PC-3 (cell line): ENCODE measurements at regions of chr2 and their contacts with region 1.

Region 1: GRCh38 chr2:64330281-64331113 is 123.5 kb upstream of the LGALSL start:
- DNase-seq: peak; percentile 87
- ATAC-seq: peak; percentile 49
- H3K4me3 ChIP-seq: peak overlapping the region; percentile 61
- H3K27ac ChIP-seq: no peak overlapping the region
- H3K4me1 ChIP-seq: peaks cover 32% of the 10 kb centered on the region
- H3K27me3 ChIP-seq: no peaks in the 10 kb centered on the region
- CTCF ChIP-seq: peak; percentile 96

Region 2: DNA sequence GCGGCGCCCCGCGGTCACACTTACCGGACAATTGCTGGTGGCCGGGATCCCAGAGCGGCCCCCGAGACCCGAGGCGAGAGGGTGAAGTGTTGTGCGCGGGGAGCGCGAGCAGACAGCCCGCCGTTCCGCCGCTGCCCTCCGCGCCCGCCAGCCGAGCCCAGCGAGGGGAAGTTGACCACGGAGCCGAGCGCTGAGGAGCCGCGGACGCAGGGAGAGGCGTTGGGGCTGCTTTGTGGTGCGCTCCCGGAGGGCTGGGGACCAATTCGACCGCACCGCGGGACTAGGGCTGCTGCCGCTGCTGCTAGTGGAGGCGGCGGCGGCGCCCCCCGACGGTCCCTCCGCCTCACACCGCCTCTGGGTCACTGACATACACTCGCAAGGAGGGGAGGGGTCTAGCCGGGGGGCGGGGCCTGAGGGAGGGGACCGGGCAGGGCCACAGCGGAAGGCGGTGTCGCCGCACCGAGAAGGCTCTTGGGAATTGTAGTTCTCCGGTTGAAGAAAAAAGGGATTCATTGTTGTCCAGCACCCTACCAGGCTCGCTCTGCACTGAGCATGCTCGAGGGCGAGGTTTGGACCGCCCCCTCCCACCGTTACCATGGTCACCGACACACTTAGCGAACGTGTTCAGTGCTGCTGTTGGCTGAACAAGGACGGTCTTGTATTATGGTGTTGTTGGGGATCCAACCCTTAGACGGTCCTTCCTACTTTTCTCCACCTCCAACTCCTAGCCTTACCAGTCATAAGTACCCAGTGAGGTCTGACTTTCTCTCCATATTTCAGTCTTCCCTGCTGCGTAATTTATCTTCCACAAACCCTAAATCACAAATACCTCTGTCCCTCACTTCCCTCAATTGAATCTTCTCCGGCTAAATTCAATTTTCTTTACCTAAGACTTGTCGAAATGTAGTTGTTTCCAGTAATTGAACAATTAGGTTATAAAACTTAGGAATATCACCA is 186.2 kb before region 1 on chr2 and contains the start of gene PELI1:
- CTCF ChIA-PET with region 1: no interaction called
- POLR2A ChIA-PET with region 1: no interaction called
- intact Hi-C with region 1: loop called (anchors 5 kb)
- DNase-seq: peak; percentile 97
- ATAC-seq: peak; percentile 89
- H3K4me3 ChIP-seq: peak within 1 kb of the TSS; percentile 90
- H3K27ac ChIP-seq: no peak within 1 kb of the TSS
- H3K4me1 ChIP-seq: peaks cover 18% of the 10 kb centered on the region; the same call in 1 of the 2 replicates
- H3K27me3 ChIP-seq: no peaks in the 10 kb centered on the region
- CTCF ChIP-seq: peak; percentile 21; the same call in 1 of the 2 replicates
- total RNA-seq, gene PELI1: 5.6 and 10.4 TPM in 2 replicates

Region 3: GRCh38 chr2:64192125-64192479 is 138.4 kb before region 1 on chr2:
- CTCF ChIA-PET with region 1: no interaction called
- POLR2A ChIA-PET with region 1: no interaction called
- intact Hi-C with region 1: no loop called
- DNase-seq: no peak
- ATAC-seq: no peak
- H3K4me3 ChIP-seq: no peak overlapping the region
- H3K27ac ChIP-seq: no peak overlapping the region
- H3K4me1 ChIP-seq: no peaks in the 10 kb centered on the region
- H3K27me3 ChIP-seq: no peaks in the 10 kb centered on the region
- CTCF ChIP-seq: no peak

Region 4: GRCh38 chr2:64267699-64268098 is 62.8 kb before region 1 on chr2:
- CTCF ChIA-PET with region 1: no interaction called
- POLR2A ChIA-PET with region 1: no interaction called
- intact Hi-C with region 1: no loop called
- DNase-seq: no peak
- ATAC-seq: no peak
- H3K4me3 ChIP-seq: no peak overlapping the region
- H3K27ac ChIP-seq: no peak overlapping the region
- H3K4me1 ChIP-seq: peaks cover 19% of the 10 kb centered on the region
- H3K27me3 ChIP-seq: no peaks in the 10 kb centered on the region
- CTCF ChIP-seq: no peak

Region 5: DNA sequence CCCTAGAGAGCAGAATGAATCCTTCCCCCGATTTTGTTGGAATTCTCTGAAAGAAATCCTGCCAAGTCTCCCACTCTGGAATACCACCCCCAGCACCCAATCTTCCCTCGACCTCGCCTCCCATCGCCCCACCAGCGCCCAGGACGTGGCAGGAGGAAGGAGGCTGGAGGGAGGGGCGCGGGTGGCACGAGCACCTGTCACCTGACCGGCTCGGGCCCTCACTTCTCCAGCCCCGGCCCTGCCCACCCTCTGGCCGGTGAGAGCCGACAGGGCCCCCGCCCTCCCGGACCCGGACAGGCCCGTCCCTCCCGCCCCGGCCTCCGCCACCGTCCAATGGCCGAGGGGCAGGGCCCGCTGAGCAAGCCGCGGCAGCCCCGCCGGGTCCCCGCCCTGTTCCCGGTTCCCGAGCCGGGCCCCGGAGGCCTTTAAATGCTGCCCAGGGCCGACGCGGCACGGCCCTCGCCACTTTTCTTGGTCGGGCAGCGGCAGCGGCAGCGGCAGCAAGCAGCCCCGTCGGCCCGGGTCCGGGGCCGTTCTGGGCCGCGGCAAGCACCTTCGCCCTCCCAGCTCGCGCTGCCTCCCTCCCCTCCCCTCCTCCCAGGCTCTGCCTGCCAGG is 123.4 kb after region 1 on chr2 and contains the start of gene LGALSL:
- CTCF ChIA-PET with region 1: interaction called, 3 read pairs
- POLR2A ChIA-PET with region 1: no interaction called
- intact Hi-C with region 1: loop called (anchors 10 kb)
- DNase-seq: peak; percentile 67
- ATAC-seq: peak; percentile 79
- H3K4me3 ChIP-seq: peak within 1 kb of the TSS; percentile 75
- H3K27ac ChIP-seq: peak within 1 kb of the TSS; percentile 15
- H3K4me1 ChIP-seq: peaks cover 26% of the 10 kb centered on the region
- H3K27me3 ChIP-seq: no peaks in the 10 kb centered on the region
- CTCF ChIP-seq: no peak
- total RNA-seq, gene LGALSL: 12.1 and 16.0 TPM in 2 replicates

Region 6: GRCh38 chr2:64488050-64488974 is 157.8 kb after region 1 on chr2:
- CTCF ChIA-PET with region 1: interaction called, 15 read pairs
- POLR2A ChIA-PET with region 1: no interaction called
- intact Hi-C with region 1: loop called (anchors 1 kb)
- DNase-seq: peak; percentile 83
- ATAC-seq: peak; percentile 64
- H3K4me3 ChIP-seq: no peak overlapping the region
- H3K27ac ChIP-seq: no peak overlapping the region
- H3K4me1 ChIP-seq: peaks cover 10% of the 10 kb centered on the region; the same call in 1 of the 2 replicates
- H3K27me3 ChIP-seq: no peaks in the 10 kb centered on the region
- CTCF ChIP-seq: peak; percentile 73

Region 7: DNA sequence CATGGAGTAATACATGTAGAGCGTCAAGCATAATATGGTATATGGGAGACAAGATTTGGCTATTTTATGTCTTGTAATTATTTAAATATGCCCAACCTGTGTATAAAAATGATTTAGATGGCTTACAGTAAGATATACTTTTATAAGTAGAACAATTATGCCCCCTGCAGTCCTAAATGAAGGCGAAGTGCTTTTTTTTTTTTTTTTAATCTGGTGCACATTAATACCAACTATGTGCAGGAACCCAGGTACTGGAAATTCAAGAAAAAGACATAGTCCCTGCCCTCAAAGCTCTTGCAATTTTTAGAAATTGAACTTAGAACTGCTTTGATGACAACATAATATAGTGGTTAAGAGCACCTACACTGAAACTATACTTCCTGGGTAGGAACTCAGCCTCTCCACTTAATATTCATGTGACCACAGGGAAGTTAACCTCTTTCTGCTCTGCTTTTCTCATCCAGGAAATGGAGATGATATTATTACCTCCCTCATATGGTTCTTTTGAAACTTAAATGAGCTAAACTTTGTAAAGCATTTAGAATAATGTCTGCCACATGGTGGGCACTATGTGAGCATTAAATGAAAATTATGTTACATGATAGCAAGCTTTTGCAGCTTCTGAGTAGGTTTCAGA is 231.8 kb after region 1 on chr2:
- CTCF ChIA-PET with region 1: no interaction called
- POLR2A ChIA-PET with region 1: no interaction called
- intact Hi-C with region 1: loop called (anchors 2 kb)
- DNase-seq: peak; percentile 71
- ATAC-seq: peak; percentile 66
- H3K4me3 ChIP-seq: no peak overlapping the region
- H3K27ac ChIP-seq: no peak overlapping the region
- H3K4me1 ChIP-seq: no peaks in the 10 kb centered on the region
- H3K27me3 ChIP-seq: no peaks in the 10 kb centered on the region
- CTCF ChIP-seq: peak; percentile 82